Posterior vena cava (tissue), 2 donors: ENCODE measurements at regions of chr17 and their contacts with region 1.

Region 1: GRCh38 chr17:42660692-42661345 is 1.7 kb downstream of the TUBG2 start:
- DNase-seq: peak; percentile 17

Region 2: DNA sequence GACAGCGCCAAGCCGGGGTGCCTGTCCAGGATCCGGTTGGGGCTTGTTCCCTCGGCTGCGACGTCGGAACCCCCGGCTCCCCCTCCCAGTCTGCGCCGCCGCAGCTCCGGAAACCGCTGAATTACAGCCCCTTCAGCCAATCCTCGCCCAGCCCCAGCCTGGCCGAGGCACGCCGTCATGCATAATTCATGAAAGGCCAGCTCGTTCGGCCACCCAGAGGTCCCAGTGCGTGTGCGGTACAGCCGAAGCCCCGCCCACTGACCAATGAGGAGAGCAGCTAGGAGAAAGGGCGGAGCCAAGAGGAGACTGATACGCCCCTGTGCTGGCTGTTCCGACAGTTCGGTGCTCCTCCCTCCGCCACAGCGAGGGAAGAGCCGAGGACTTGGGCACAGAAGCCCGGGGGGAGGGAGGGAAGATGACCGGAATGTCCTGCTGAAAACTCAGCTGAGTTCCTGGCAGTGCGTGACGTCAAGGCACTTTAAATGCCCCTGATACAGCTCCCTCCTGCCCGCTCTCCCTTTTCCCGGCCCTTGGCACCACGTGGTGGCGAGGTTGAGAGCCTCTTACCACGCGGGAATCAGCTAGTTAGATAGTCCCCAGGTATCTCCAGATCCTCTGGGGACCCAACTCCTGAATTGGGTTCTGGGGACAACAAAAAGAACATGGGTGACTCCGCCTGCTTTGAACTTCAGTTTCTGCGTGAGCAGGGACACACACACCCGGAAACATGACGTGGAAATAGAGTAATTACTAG is 272.3 kb before region 1 on chr17 and contains the start of gene STAT3:
- intact Hi-C with region 1: no loop called
- DNase-seq: peak; percentile 100
- total RNA-seq, gene STAT3: 230 to 241 TPM

Region 3: GRCh38 chr17:42618442-42619150 is 42.2 kb before region 1 on chr17:
- intact Hi-C with region 1: loop called in 1 of 2 experiments (anchors 5 kb)
- DNase-seq: peak; percentile 11